PC-9 (cell line): ENCODE measurements at regions of chr7 and their contacts with region 1.

Region 1: GRCh38 chr7:66920769-66921395 is at the start of gene TMEM248:
- DNase-seq: peak; percentile 62 to 90
- H3K4me3 ChIP-seq: peak within 1 kb of the TSS; percentile 82
- H3K27ac ChIP-seq: peak within 1 kb of the TSS; percentile 44; the same call in 1 of the 2 replicates
- H3K4me1 ChIP-seq: peaks cover 17% of the 10 kb centered on the region
- H3K27me3 ChIP-seq: no peaks in the 10 kb centered on the region
- CTCF ChIP-seq: no peak
- total RNA-seq, gene TMEM248: 83.6 and 84.3 TPM in 2 replicates

Region 2: DNA sequence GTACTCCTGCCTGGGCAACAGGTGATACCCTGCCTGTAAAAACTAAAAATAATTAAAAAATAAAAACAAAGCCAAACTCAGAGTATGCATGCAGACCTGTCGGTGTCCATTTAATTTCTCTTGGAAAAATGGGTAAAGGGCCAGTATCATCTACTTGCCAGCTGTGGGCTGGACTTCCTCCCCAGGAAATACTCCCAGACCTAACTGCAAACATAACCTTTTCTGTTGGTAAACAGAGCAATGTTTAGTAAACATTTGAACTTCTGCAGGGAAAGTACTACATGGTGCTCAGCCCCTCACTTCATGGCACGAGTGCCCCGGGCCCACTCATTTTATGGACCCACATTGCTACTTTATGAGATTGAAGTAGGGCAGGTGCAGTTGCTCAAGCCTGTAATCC is 10.1 kb before region 1 on chr7:
- CTCF ChIA-PET with region 1: no interaction called
- POLR2A ChIA-PET with region 1: interaction called, 13 read pairs
- intact Hi-C with region 1: no loop called
- DNase-seq: no peak
- H3K4me3 ChIP-seq: no peak overlapping the region
- H3K27ac ChIP-seq: no peak overlapping the region
- H3K4me1 ChIP-seq: no peaks in the 10 kb centered on the region
- H3K27me3 ChIP-seq: no peaks in the 10 kb centered on the region
- CTCF ChIP-seq: no peak

Region 3: GRCh38 chr7:66964411-66964810 is 43.5 kb after region 1 on chr7:
- CTCF ChIA-PET with region 1: no interaction called
- POLR2A ChIA-PET with region 1: interaction called, 20 read pairs
- intact Hi-C with region 1: no loop called
- DNase-seq: no peak
- H3K4me3 ChIP-seq: no peak overlapping the region
- H3K27ac ChIP-seq: no peak overlapping the region
- H3K4me1 ChIP-seq: no peaks in the 10 kb centered on the region
- H3K27me3 ChIP-seq: no peaks in the 10 kb centered on the region
- CTCF ChIP-seq: no peak

Region 4: GRCh38 chr7:67209256-67209655 is 288.4 kb after region 1 on chr7:
- CTCF ChIA-PET with region 1: no interaction called
- POLR2A ChIA-PET with region 1: no interaction called
- intact Hi-C with region 1: no loop called
- DNase-seq: no peak
- H3K4me3 ChIP-seq: no peak overlapping the region
- H3K27ac ChIP-seq: no peak overlapping the region
- H3K4me1 ChIP-seq: no peaks in the 10 kb centered on the region
- H3K27me3 ChIP-seq: no peaks in the 10 kb centered on the region
- CTCF ChIP-seq: no peak